GM12878 (cell line): ENCODE measurements at regions of chr1 and their contacts with region 1.

Region 1: GRCh38 chr1:205812878-205813754 is at the start of gene SLC41A1:
- DNase-seq: peak; percentile 63
- ATAC-seq: peak; percentile 96
- H3K4me3 ChIP-seq: peak within 1 kb of the TSS; percentile 63
- H3K27ac ChIP-seq: no peak within 1 kb of the TSS
- H3K4me1 ChIP-seq: peaks cover 6% of the 10 kb centered on the region
- H3K27me3 ChIP-seq: peaks cover 2 to 10% of the 10 kb centered on the region in 2 experiments; a peak in 2 of 4 replicates
- CTCF ChIP-seq: no peak
- EP300 ChIP-seq: no peak
- POLR2A ChIP-seq: peak; percentile 46; the same call in 1 of the 2 replicates
- RAD21 ChIP-seq: no peak
- polyA plus RNA-seq, gene SLC41A1: 0.13 to 0.15 TPM

Region 2: GRCh38 chr1:205422993-205423625 is 390.0 kb before region 1 on chr1:
- CTCF ChIA-PET with region 1: no interaction called
- POLR2A ChIA-PET with region 1: no interaction called
- RAD21 ChIA-PET with region 1: no interaction called
- SMC1A ChIA-PET with region 1: no interaction called
- in situ Hi-C with region 1: no loop called
- intact Hi-C with region 1: no loop called
- DNase-seq: no peak
- ATAC-seq: no peak
- H3K4me3 ChIP-seq: no peak overlapping the region
- H3K27ac ChIP-seq: no peak overlapping the region
- H3K4me1 ChIP-seq: no peaks in the 10 kb centered on the region
- H3K27me3 ChIP-seq: peaks cover 6% of the 10 kb centered on the region in 2 experiments; a peak in 3 of 4 replicates
- CTCF ChIP-seq: peak in 1 of 3 experiments; percentile 26; a peak in 1 of 6 replicates
- EP300 ChIP-seq: no peak
- POLR2A ChIP-seq: no peak
- RAD21 ChIP-seq: 0 out of 2 replicates have a peak, but pooled peaks have one; percentile 3

Region 3: GRCh38 chr1:205775015-205775716 is 38.0 kb before region 1 on chr1 and contains the start of gene RAB29:
- CTCF ChIA-PET with region 1: interaction called, 4 read pairs
- POLR2A ChIA-PET with region 1: interaction called, 5 read pairs
- RAD21 ChIA-PET with region 1: interaction called, 4 read pairs
- SMC1A ChIA-PET with region 1: interaction called, 12 read pairs
- in situ Hi-C with region 1: no loop called
- intact Hi-C with region 1: no loop called
- DNase-seq: peak; percentile 57
- ATAC-seq: peak; percentile 83
- H3K4me3 ChIP-seq: peak within 1 kb of the TSS; percentile 88
- H3K27ac ChIP-seq: peak within 1 kb of the TSS; percentile 63
- H3K4me1 ChIP-seq: peaks cover 12% of the 10 kb centered on the region
- H3K27me3 ChIP-seq: no peaks in the 10 kb centered on the region
- CTCF ChIP-seq: no peak
- EP300 ChIP-seq: peak in 1 of 2 experiments; percentile 46; a peak in 1 of 4 replicates
- POLR2A ChIP-seq: peak; percentile 50; the same call in 1 of the 2 replicates
- RAD21 ChIP-seq: no peak
- polyA plus RNA-seq, gene RAB29: 12.6 to 16.2 TPM

Region 4: DNA sequence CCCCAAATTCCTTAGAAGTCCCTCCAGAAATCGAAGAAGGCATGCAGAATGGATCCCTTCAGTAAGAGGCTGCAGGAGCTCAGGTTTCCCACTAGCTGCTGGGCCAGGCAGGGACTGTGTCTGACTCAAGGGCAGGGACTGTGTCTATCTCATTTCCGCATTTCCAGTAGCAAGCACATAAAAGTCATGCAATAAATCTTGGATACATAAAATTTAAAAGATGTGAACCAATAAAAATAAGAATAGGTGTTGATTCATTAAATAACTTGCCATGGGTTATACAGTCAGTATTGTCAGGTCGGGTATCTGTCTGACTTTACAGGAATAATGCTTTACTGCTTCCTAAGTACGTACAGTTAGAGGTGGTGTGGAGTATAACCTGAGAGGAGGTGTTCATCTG is 21.6 kb after region 1 on chr1:
- CTCF ChIA-PET with region 1: no interaction called
- POLR2A ChIA-PET with region 1: no interaction called
- RAD21 ChIA-PET with region 1: no interaction called
- SMC1A ChIA-PET with region 1: no interaction called
- in situ Hi-C with region 1: no loop called
- intact Hi-C with region 1: no loop called
- DNase-seq: no peak
- ATAC-seq: no peak
- H3K4me3 ChIP-seq: no peak overlapping the region
- H3K27ac ChIP-seq: no peak overlapping the region
- H3K4me1 ChIP-seq: no peaks in the 10 kb centered on the region
- H3K27me3 ChIP-seq: peaks cover 0 to 6% of the 10 kb centered on the region in 2 experiments; a peak in 2 of 4 replicates
- CTCF ChIP-seq: no peak
- EP300 ChIP-seq: no peak
- POLR2A ChIP-seq: no peak
- RAD21 ChIP-seq: no peak

Region 5: DNA sequence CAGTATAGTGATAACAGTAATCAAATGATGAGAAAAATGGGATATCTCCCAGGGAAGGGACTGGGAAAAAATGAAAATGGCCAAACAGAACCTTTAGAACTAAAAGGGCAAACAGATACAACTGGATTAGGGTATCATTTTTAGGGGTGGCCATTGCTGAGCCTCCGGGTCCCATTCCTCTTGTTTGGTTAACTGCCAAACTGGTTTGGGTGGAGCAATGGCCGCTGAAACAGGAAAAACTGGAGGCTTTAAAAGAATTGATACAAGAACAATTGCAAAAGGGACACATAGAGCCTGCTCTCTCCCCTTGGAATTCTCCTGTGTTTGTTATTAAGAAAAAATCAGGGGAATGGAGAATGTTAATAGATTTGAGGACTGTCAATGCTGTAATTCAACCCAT is 47.5 kb after region 1 on chr1:
- CTCF ChIA-PET with region 1: no interaction called
- POLR2A ChIA-PET with region 1: no interaction called
- RAD21 ChIA-PET with region 1: no interaction called
- SMC1A ChIA-PET with region 1: interaction called, 3 read pairs
- in situ Hi-C with region 1: no loop called
- intact Hi-C with region 1: loop called (anchors 5 kb)
- DNase-seq: no peak
- ATAC-seq: no peak
- H3K4me3 ChIP-seq: no peak overlapping the region
- H3K27ac ChIP-seq: no peak overlapping the region
- H3K4me1 ChIP-seq: no peaks in the 10 kb centered on the region
- H3K27me3 ChIP-seq: no peaks in the 10 kb centered on the region
- CTCF ChIP-seq: no peak
- EP300 ChIP-seq: no peak
- POLR2A ChIP-seq: no peak
- RAD21 ChIP-seq: no peak

Region 6: GRCh38 chr1:205919026-205919746 is 106.1 kb after region 1 on chr1:
- CTCF ChIA-PET with region 1: interaction called, 4 read pairs
- POLR2A ChIA-PET with region 1: no interaction called
- RAD21 ChIA-PET with region 1: no interaction called
- SMC1A ChIA-PET with region 1: no interaction called
- in situ Hi-C with region 1: no loop called
- intact Hi-C with region 1: loop called (anchors 5 kb)
- DNase-seq: peak; percentile 24
- ATAC-seq: peak; percentile 94
- H3K4me3 ChIP-seq: no peak overlapping the region
- H3K27ac ChIP-seq: no peak overlapping the region
- H3K4me1 ChIP-seq: no peaks in the 10 kb centered on the region; the same call in 1 of the 2 replicates
- H3K27me3 ChIP-seq: peaks cover 2 to 4% of the 10 kb centered on the region in 2 experiments; a peak in 2 of 4 replicates
- CTCF ChIP-seq: peak; percentile 90 to 93 (median 93)
- EP300 ChIP-seq: no peak
- POLR2A ChIP-seq: no peak
- RAD21 ChIP-seq: peak; percentile 91